ENCODE measurements at regions of chr16 and their contacts with region 1.

Region 1: DNA sequence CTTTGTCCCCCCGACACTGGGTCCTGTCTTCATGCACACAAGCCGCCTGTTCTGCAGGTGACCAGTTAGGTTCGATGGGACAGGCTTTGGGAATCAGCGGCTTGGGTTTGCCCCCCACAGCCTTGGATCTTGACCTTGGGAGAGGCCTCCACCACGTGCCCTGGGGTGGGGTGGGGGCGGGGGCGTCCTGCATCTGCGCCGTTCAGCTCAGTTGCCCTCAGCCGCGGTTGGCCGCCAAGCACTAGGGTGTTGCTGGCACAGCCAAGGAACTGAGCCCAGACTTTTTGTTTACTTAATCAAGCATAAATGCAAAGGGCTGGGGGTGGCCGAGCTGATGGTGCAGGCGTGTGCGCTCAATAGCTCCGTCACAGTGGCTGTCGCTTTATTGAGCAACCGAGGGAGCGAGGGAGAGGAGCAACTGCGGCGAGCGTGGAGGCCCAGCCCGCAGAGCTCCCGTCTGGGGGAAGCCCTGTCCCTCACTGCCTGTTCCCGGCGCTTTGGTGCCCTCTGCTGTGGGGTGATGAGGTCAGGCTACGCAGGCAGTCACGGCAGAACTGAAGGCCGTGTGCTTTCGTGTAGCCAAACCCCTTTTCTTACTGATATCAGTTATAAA is 33.9 kb downstream of the JPH3 start:
- DNase-seq: peak; percentile 61 to 84
- H3K4me3 ChIP-seq: peak overlapping the region; percentile 37; the same call in 1 of the 2 replicates
- H3K27ac ChIP-seq: no peak overlapping the region
- H3K4me1 ChIP-seq: no peaks in the 10 kb centered on the region; the same call in 1 of the 2 replicates
- H3K27me3 ChIP-seq: peaks cover 90% of the 10 kb centered on the region
- CTCF ChIP-seq: peak; percentile 67

Region 2: DNA sequence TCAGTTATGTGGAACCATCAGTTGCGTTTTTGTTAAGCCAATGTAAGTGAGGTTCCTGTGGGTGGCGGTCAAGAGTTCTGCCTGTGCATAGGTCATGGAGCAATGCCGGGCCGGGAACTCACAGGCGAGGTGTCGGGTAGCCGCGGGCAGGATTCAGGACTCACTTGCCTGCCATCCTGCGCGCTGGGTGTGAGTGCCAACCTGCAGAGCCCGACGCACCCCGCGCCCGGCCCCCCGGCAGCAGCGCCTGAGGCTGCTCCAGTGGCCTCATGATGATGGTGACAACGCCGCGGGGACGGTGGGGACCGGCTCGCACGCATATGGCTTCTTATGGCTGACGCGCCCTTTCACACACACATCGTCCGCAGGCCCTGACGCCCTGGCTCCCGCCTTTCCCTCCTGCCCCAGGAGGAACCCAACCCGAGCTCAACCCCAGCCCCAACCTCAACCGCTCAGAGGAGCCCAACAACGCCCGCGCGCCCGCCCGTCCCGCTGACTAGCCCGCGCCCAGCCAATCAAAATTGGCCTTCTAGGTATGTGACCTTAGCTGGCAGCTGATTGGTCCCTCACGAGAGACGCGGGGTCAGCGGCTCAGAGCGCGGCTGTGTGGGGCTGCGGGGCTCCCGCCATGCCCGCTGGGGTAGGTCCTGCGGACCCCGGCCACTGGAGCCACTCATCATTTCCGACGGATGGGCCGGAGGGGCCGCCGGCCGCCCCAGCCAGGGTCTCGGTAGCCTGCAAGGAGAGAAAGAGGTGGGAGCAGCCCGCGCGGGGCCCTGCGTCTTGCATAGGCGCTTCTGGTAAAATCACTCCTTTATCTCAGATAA is 319.0 kb before region 1 on chr16 and contains the start of gene C16orf95:
- CTCF ChIA-PET with region 1: no interaction called
- POLR2A ChIA-PET with region 1: no interaction called
- intact Hi-C with region 1: loop called (anchors 5 kb)
- DNase-seq: peak; percentile 85 to 96
- H3K4me3 ChIP-seq: peak within 1 kb of the TSS; percentile 99
- H3K27ac ChIP-seq: peak within 1 kb of the TSS; percentile 86
- H3K4me1 ChIP-seq: peaks cover 6% of the 10 kb centered on the region; the same call in 1 of the 2 replicates
- H3K27me3 ChIP-seq: no peaks in the 10 kb centered on the region
- CTCF ChIP-seq: peak; percentile 62
- total RNA-seq, gene C16orf95: 7.5 and 12.9 TPM in 2 replicates

Region 3: GRCh38 chr16:87395193-87395842 is 240.9 kb before region 1 on chr16:
- CTCF ChIA-PET with region 1: interaction called, 14 read pairs
- POLR2A ChIA-PET with region 1: no interaction called
- intact Hi-C with region 1: loop called (anchors 1 kb)
- DNase-seq: no peak
- H3K4me3 ChIP-seq: no peak overlapping the region
- H3K27ac ChIP-seq: no peak overlapping the region
- H3K4me1 ChIP-seq: peaks cover 16% of the 10 kb centered on the region
- H3K27me3 ChIP-seq: no peaks in the 10 kb centered on the region
- CTCF ChIP-seq: no peak

Region 4: GRCh38 chr16:87461466-87461991 is 174.6 kb before region 1 on chr16:
- CTCF ChIA-PET with region 1: interaction called, 8 read pairs
- POLR2A ChIA-PET with region 1: no interaction called
- intact Hi-C with region 1: loop called (anchors 2 kb)
- DNase-seq: peak; percentile 93
- H3K4me3 ChIP-seq: peak overlapping the region; percentile 28; the same call in 1 of the 2 replicates
- H3K27ac ChIP-seq: 0 out of 2 replicates have a peak overlapping the region, but pooled peaks have one; percentile 16
- H3K4me1 ChIP-seq: peaks cover 65% of the 10 kb centered on the region
- H3K27me3 ChIP-seq: no peaks in the 10 kb centered on the region
- CTCF ChIP-seq: peak; percentile 66

Region 5: GRCh38 chr16:87506423-87507350 is 129.5 kb before region 1 on chr16:
- CTCF ChIA-PET with region 1: no interaction called
- POLR2A ChIA-PET with region 1: no interaction called
- intact Hi-C with region 1: no loop called
- DNase-seq: no peak
- H3K4me3 ChIP-seq: no peak overlapping the region
- H3K27ac ChIP-seq: no peak overlapping the region
- H3K4me1 ChIP-seq: no peaks in the 10 kb centered on the region
- H3K27me3 ChIP-seq: peaks cover 26% of the 10 kb centered on the region; the same call in 1 of the 2 replicates
- CTCF ChIP-seq: no peak

Region 6: GRCh38 chr16:87550496-87550961 is 85.6 kb before region 1 on chr16:
- CTCF ChIA-PET with region 1: no interaction called
- POLR2A ChIA-PET with region 1: no interaction called
- intact Hi-C with region 1: loop called (anchors 1 kb)
- DNase-seq: peak in 1 of 2 experiments; percentile 41
- H3K4me3 ChIP-seq: no peak overlapping the region
- H3K27ac ChIP-seq: no peak overlapping the region
- H3K4me1 ChIP-seq: no peaks in the 10 kb centered on the region
- H3K27me3 ChIP-seq: peaks cover 83% of the 10 kb centered on the region
- CTCF ChIP-seq: peak; percentile 99

Region 7: DNA sequence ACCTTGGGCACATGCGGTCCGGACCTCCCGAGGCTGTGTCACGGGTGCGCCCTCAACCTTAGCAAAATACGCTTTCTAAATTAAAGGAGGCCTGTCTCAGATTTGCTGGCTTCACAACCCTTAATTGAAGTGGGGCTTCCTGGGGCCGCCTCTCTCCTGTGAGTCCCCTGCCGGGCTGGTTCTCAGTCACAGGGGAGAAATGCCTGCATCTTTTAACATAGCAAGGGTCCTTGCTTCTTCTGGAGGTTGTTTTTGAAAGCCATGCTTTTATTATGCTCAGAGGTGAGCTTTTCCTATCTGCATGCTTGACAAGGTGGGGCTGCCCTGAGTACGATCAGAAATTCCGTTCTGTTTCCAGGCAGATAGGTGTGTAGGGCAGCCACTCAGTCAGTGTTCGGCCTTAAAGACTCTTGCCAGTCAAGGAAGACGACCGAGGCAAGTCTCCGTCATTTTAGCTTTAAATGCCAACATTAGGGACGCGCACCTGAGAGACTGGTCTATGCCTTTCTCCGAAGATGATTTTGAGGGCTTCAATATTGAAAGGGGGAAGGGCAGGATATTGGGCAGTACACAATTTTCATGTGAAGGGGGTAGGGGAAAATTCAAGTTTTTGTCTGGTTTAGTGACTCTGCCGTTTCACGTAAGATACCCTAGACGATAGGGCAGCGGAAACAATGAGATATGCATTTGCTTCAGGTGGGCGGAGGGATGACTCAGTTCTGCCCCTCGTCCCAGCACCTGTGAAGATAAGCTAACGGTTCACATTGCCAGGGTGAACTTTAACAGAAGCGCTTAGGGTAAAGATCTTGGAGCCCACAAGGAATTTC is 238.7 kb after region 1 on chr16:
- CTCF ChIA-PET with region 1: interaction called, 5 read pairs
- POLR2A ChIA-PET with region 1: no interaction called
- intact Hi-C with region 1: loop called (anchors 2 kb)
- DNase-seq: no peak
- H3K4me3 ChIP-seq: no peak overlapping the region
- H3K27ac ChIP-seq: no peak overlapping the region
- H3K4me1 ChIP-seq: peaks cover 28% of the 10 kb centered on the region
- H3K27me3 ChIP-seq: no peaks in the 10 kb centered on the region
- CTCF ChIP-seq: no peak

Measured in PC-9 (cell line).